ENCODE measurements at regions of chr1 and their contacts with region 1.

Region 1: DNA sequence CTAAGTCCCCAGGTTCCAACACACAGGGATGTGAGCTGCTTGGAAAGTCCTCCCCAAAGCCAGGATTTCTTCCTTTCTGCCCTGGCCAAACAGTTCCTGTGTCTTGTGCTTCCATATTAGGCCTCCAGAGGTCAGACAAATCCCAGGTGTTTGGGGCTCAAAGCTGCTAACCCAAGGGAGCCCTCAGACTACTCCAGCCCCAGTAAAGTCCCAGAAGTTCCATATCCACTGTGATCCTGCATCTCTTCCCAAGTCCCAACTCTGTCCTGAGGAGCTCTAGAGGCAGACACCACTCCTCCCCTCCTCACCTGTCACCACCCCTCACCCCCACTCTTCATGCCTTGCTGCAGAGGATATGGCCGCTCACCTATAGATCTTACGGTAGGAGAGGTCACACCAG is 27.8 kb upstream of the MAGOH start:
- H3K4me3 ChIP-seq: no peak overlapping the region
- H3K27ac ChIP-seq: no peak overlapping the region
- H3K4me1 ChIP-seq: no peaks in the 10 kb centered on the region
- CTCF ChIP-seq: peak; percentile 33; the same call in 1 of the 2 replicates

Region 2: GRCh38 chr1:53393325-53393792 is 127.3 kb after region 1 on chr1:
- CTCF ChIA-PET with region 1: interaction called, 5 read pairs
- POLR2A ChIA-PET with region 1: interaction called, 10 read pairs
- H3K4me3 ChIP-seq: no peak overlapping the region
- H3K27ac ChIP-seq: no peak overlapping the region
- H3K4me1 ChIP-seq: no peaks in the 10 kb centered on the region
- CTCF ChIP-seq: peak; percentile 76

Measured in HEK293 (cell line).